ENCODE measurements at regions of chr16 and their contacts with region 1.

Region 1: DNA sequence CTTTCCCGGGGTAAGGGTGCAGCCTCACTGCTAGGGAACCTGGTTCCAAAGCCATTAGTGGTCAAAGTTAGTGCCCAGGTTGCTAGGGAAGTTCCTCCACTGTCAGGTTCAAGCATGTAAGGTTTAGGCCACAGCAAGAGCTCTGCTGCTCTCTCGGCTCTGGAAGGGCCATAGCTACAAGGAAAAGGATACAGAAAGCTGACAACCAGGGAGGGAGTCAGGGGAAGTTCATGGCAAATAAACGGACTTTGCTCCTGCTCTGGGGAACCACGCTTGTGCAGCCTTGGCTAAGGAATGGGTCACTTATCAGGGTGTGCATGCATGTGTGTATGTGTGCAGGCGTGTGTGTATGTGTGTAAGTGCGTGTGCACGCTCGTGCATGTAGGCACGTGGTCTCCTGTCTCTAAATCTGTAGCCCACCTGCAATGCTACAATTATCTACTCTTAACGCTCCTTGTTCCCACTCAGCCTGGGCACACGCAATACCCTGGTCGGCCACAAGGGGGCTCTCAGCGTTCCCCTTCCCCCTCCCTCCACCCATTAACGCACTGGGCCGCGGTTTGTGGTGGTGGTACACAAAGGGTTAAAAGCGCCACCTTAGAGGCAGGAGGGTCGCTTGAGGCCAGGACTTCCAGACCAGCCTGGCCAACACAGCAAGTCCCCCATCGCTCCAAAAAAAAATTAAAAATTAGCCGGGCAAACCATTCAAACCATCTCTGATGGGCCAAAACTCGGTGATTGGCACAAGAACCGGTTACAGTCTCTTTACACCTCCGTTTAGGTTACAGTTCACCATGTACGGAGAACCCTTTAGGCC is 48.4 kb upstream of the KDM8 start:
- DNase-seq: peak in 1 of 2 donors; percentile 63
- H3K4me3 ChIP-seq: no peak overlapping the region
- H3K27ac ChIP-seq: no peak overlapping the region
- H3K4me1 ChIP-seq: no peaks in the 10 kb centered on the region
- H3K27me3 ChIP-seq: no peaks in the 10 kb centered on the region
- CTCF ChIP-seq: peak; percentile 78 to 95 (median 92)

Region 2: DNA sequence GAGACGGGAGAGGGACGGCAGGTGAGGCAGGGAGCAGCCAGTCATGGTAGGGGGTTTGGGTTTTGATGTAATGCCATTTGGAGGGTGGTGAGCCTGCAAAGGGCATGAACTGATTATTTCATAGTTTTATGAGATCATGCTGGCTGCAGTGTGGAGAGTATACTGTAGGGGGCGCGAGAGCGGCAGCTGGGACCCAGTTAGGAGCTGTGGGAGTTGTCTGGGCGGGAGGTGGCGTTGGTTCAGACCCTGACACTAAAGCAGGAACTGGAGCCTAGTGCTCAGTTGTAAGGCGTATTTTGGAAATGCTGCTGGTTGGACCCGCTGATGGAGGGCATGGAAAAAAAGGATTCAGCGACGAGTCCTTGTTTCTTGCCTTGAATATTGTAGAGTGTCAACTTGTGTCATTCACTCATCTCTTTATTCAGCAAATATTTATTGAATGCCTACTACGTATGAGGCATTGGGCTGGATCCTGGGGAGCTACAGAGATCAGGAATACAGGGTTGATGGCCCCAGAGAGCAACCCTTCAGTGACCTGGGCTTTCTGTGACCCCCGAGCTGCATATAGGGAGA is 24.7 kb after region 1 on chr16:
- intact Hi-C with region 1: no loop called
- DNase-seq: peak; percentile 21 to 91
- H3K4me3 ChIP-seq: no peak overlapping the region
- H3K27ac ChIP-seq: no peak overlapping the region
- H3K4me1 ChIP-seq: no peaks in the 10 kb centered on the region
- H3K27me3 ChIP-seq: no peaks in the 10 kb centered on the region
- CTCF ChIP-seq: peak; percentile 80 to 88 (median 87)

Region 3: DNA sequence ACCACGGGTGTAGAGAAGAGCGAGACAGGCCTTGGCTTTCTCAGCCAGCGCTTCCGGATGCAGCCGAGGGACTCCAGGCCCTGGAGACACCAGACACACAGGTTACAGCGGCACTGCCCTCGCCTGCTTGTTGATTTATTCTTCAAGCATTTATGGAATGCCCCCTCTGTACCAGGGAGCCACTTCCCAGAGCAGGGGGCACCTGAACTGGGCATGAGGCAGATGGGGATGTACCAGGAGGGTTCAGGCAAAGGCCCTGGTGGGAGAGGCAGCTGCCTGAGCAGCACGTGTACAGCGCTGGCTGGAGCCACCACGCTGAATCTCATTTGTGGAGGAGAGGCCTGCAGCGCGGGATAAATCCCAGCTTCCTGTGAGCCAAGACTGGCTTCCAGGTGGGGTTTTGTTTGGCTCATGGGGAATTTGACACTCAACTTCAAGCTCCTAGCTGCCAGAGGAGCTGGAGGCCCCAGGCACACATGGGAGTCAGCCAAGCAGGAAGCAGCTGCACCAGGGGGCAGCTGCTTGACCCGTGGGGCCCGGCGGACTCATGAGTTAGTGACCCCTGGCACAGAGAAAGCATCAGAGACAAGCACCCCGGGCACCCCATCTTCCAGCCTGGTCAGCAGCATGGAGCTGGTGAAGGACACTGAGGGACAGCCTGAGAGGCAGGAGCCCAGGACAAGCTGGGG is 306.7 kb after region 1 on chr16:
- intact Hi-C with region 1: loop called (anchors 1 kb)
- DNase-seq: no peak
- H3K4me3 ChIP-seq: no peak overlapping the region
- H3K27ac ChIP-seq: no peak overlapping the region
- H3K4me1 ChIP-seq: no peaks in the 10 kb centered on the region
- H3K27me3 ChIP-seq: no peaks in the 10 kb centered on the region
- CTCF ChIP-seq: no peak